ENCODE measurements at regions of chr1 and their contacts with region 1.

Region 1: DNA sequence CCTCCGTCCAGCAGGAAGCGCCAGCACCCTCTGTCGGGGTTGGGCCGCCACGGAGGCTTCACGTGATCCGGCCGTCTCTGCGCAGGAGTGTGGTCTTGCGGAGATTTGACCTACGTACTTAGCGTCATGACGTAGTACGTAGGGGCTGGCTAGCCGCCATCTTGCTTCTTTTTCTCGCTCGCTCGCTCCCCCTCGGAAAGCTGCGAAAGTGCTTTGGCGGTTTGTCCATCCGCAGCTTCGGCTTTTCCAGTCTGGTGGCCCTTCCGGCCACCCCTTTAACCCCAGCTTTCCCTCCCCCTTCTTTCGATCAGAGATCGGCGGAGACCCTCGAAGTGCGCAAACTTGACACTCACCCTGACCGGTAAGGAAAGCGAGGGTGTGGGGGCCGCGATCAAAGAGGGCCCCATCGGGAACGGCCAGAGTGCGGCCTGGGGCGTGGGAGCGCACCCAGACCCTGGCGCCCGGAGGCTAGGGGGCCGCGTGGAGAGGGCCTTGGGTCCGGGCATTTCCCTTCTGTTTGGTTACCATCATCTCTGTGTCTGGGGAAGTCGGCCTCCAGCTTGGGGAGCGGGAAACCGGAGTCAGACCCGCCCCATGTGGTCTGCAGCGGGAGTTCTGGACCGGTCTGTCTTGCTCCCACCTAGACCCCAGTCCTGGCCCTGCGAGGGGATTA is at the start of gene PRRC2C:
- DNase-seq: peak; percentile 79 to 98
- ATAC-seq: peak; percentile 97 to 98
- H3K4me3 ChIP-seq: peak within 1 kb of the TSS; percentile 79
- H3K27ac ChIP-seq: peak within 1 kb of the TSS; percentile 92 to 98
- H3K4me1 ChIP-seq: peaks cover 25% of the 10 kb centered on the region
- CTCF ChIP-seq: peak; percentile 64; the same call in 2 of the 3 replicates
- EP300 ChIP-seq: no peak
- POLR2A ChIP-seq: peak; percentile 71
- RAD21 ChIP-seq: peak; percentile 49 to 67
- polyA plus RNA-seq, gene PRRC2C: 96.3 and 139 TPM in 2 replicates

Region 2: GRCh38 chr1:171256940-171257606 is 228.4 kb before region 1 on chr1:
- CTCF ChIA-PET with region 1: no interaction called
- POLR2A ChIA-PET with region 1: no interaction called
- DNase-seq: peak in 1 of 2 experiments; percentile 12
- ATAC-seq: no peak
- H3K4me3 ChIP-seq: no peak overlapping the region
- H3K27ac ChIP-seq: no peak overlapping the region
- H3K4me1 ChIP-seq: peaks cover 4% of the 10 kb centered on the region; the same call in 1 of the 3 replicates
- CTCF ChIP-seq: no peak
- EP300 ChIP-seq: no peak
- POLR2A ChIP-seq: no peak
- RAD21 ChIP-seq: no peak

Region 3: DNA sequence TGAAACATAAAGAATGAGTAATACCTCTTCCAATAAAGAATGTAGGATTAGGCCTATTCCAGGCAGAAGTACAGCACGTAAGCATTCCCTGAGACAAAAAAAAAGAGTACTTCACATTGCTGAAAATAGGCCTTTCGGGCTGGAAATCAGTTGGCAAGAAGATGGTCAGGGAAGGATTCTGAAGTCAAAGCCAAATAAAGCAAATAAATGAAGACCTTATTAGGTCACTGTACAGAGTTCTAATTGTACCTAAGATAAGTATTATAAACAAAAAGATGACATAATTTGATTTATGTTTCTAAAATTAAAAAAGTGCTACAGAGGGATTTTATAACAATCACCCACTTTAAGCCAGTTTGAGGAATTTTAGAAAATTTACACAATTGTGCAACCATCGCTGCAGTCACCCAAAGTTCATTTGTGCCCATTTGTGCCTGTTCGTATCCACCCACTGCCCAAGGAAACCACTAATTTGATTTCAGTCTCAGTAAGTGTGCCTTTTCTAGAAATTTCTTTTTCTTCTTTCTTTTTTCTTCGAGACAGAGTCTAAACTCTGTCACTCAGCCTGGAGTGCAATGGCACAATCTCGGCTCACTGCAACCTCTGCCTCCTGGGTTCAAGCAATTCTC is 112.9 kb before region 1 on chr1:
- CTCF ChIA-PET with region 1: no interaction called
- POLR2A ChIA-PET with region 1: no interaction called
- DNase-seq: no peak
- ATAC-seq: no peak
- H3K4me3 ChIP-seq: no peak overlapping the region; the same call in 2 of the 3 replicates
- H3K27ac ChIP-seq: peak overlapping the region; percentile 54 to 57; a peak in 4 of 6 replicates
- H3K4me1 ChIP-seq: no peaks in the 10 kb centered on the region
- CTCF ChIP-seq: no peak
- EP300 ChIP-seq: no peak
- POLR2A ChIP-seq: no peak
- RAD21 ChIP-seq: no peak

Region 4: GRCh38 chr1:171545523-171545922 is 60.0 kb after region 1 on chr1:
- CTCF ChIA-PET with region 1: interaction called, 10 read pairs
- POLR2A ChIA-PET with region 1: no interaction called
- DNase-seq: no peak
- ATAC-seq: no peak
- H3K4me3 ChIP-seq: no peak overlapping the region
- H3K27ac ChIP-seq: no peak overlapping the region
- H3K4me1 ChIP-seq: no peaks in the 10 kb centered on the region
- CTCF ChIP-seq: no peak
- EP300 ChIP-seq: no peak
- POLR2A ChIP-seq: no peak
- RAD21 ChIP-seq: no peak